Panc1 (cell line): ENCODE measurements at regions of chr1 and their contacts with region 1.

Region 1: DNA sequence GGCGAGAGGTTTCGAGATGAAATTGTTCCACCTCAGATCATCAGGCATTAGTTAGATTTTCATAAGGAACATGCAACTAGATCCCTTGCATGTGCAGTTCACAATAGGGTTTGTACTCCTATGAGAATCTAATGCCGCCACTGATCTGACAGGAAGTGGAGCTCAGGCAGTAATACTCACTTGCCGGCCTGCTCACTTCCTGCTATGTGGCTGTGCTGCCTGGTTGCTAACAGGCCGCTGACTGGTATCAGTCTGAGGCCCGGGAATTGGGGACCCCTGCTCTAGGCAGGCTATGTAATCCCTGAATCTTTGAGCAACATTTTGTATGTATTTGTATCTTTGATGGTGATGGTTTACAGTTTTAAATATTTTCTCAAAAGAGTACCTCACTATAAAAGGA is 32.5 kb downstream of the XKR8 start:
- DNase-seq: no peak
- ATAC-seq: no peak
- H3K4me3 ChIP-seq: no peak overlapping the region
- H3K27ac ChIP-seq: no peak overlapping the region
- H3K4me1 ChIP-seq: no peaks in the 10 kb centered on the region
- H3K27me3 ChIP-seq: no peaks in the 10 kb centered on the region
- CTCF ChIP-seq: no peak

Region 2: GRCh38 chr1:28341591-28341990 is 349.3 kb after region 1 on chr1:
- CTCF ChIA-PET with region 1: no interaction called
- POLR2A ChIA-PET with region 1: interaction called, 12 read pairs
- in situ Hi-C with region 1: no loop called
- intact Hi-C with region 1: no loop called
- DNase-seq: no peak
- ATAC-seq: no peak
- H3K4me3 ChIP-seq: no peak overlapping the region
- H3K27ac ChIP-seq: no peak overlapping the region
- H3K4me1 ChIP-seq: no peaks in the 10 kb centered on the region
- H3K27me3 ChIP-seq: no peaks in the 10 kb centered on the region
- CTCF ChIP-seq: no peak

Region 3: GRCh38 chr1:28392027-28392652 is 399.9 kb after region 1 on chr1:
- CTCF ChIA-PET with region 1: no interaction called
- POLR2A ChIA-PET with region 1: no interaction called
- in situ Hi-C with region 1: no loop called
- intact Hi-C with region 1: no loop called
- DNase-seq: no peak
- ATAC-seq: peak; percentile 65; the same call in 1 of the 2 replicates
- H3K4me3 ChIP-seq: no peak overlapping the region
- H3K27ac ChIP-seq: no peak overlapping the region
- H3K4me1 ChIP-seq: no peaks in the 10 kb centered on the region
- H3K27me3 ChIP-seq: no peaks in the 10 kb centered on the region
- CTCF ChIP-seq: no peak